Caco-2 (cell line): ENCODE measurements at regions of chr2 and their contacts with region 1.

Region 1: DNA sequence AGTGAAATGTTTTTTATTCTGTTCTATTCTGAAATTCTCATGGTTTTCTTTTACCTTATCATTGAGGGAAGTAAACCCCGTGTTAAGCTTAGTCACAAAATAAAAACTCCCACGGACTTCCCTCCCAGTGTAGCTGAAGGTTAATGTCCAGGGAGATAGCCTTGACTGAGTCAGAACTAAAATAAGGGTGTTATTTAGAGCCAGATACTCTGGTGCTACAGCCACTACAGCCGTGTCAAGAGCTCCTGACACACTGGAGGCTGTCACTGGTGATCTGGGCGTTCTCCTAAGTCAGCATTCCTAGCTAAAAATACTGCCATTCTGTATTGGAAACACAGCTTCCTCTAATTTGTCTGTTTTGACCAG is 82.0 kb upstream of the RANBP2 start:
- DNase-seq: no peak
- H3K4me3 ChIP-seq: no peak overlapping the region
- H3K4me3 Mint-ChIP-seq: no peak overlapping the region
- H3K27ac Mint-ChIP-seq: no peak overlapping the region
- H3K4me1 ChIP-seq: peaks cover 39% of the 10 kb centered on the region
- H3K4me1 Mint-ChIP-seq: peaks cover 24% of the 10 kb centered on the region
- H3K27me3 ChIP-seq: no peaks in the 10 kb centered on the region
- H3K27me3 Mint-ChIP-seq: no peaks in the 10 kb centered on the region
- CTCF ChIP-seq: no peak

Region 2: DNA sequence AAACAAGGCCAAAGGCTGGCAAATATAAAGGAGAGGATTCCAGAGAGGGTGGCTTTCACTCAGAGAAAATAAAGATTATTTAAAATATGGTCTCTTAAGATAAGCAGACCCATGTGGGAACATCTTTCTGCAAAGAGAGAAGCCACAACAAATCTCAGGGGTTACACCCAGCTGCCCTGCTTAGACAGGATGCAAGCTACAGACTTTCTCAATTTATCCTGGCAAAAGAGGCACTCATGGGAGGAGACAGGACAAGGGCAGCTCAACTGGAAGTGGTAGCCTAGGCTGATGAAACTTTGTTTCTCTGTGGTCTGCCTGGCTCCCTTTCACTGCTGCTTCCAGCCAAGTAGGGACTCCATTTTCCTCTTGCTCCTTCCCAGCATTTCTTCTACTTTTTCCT is 285.4 kb before region 1 on chr2:
- CTCF ChIA-PET with region 1: interaction called, 3 read pairs
- POLR2A ChIA-PET with region 1: no interaction called
- intact Hi-C with region 1: loop called (anchors 1 kb)
- DNase-seq: no peak
- H3K4me3 ChIP-seq: no peak overlapping the region
- H3K4me3 Mint-ChIP-seq: no peak overlapping the region
- H3K27ac Mint-ChIP-seq: no peak overlapping the region
- H3K4me1 ChIP-seq: no peaks in the 10 kb centered on the region
- H3K4me1 Mint-ChIP-seq: no peaks in the 10 kb centered on the region
- H3K27me3 ChIP-seq: no peaks in the 10 kb centered on the region
- H3K27me3 Mint-ChIP-seq: no peaks in the 10 kb centered on the region
- CTCF ChIP-seq: no peak

Region 3: GRCh38 chr2:108570416-108570815 is 66.9 kb before region 1 on chr2:
- CTCF ChIA-PET with region 1: no interaction called
- POLR2A ChIA-PET with region 1: no interaction called
- intact Hi-C with region 1: no loop called
- DNase-seq: no peak
- H3K4me3 ChIP-seq: no peak overlapping the region
- H3K4me3 Mint-ChIP-seq: no peak overlapping the region
- H3K27ac Mint-ChIP-seq: no peak overlapping the region
- H3K4me1 ChIP-seq: peaks cover 6% of the 10 kb centered on the region; the same call in 1 of the 2 replicates
- H3K4me1 Mint-ChIP-seq: peaks cover 36% of the 10 kb centered on the region
- H3K27me3 ChIP-seq: no peaks in the 10 kb centered on the region
- H3K27me3 Mint-ChIP-seq: no peaks in the 10 kb centered on the region
- CTCF ChIP-seq: no peak

Region 4: DNA sequence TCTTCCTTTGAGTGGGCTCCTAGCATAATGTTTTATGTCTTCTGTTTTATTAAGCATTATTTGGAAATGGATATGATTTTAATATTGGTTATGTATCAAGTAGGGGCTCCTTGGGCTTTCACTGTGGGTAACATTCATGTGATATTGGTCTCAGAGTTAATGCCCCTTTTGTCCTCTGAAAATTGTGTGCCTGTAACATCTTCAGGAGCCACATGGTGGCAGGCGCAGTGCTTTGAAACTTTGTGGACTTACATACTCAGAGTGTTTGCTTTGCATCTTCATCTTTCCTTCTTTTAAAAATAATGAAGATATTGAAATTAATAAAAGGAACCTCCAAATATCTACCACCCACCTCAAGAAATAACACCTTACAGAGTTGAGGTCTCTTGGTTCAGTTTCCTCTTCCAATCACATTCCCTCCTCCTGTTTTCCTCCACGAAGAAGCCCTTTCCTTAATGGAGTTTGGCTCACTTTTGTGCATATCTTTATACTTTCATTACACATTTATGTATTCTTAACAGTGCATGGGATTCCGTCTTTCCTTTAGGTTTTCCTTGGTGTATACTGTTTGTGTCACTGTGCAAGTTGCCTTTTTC is 29.5 kb before region 1 on chr2:
- CTCF ChIA-PET with region 1: interaction called, 25 read pairs
- POLR2A ChIA-PET with region 1: no interaction called
- intact Hi-C with region 1: loop called (anchors 1 kb)
- DNase-seq: peak in 1 of 2 experiments; percentile 35
- H3K4me3 ChIP-seq: no peak overlapping the region
- H3K4me3 Mint-ChIP-seq: no peak overlapping the region
- H3K27ac Mint-ChIP-seq: no peak overlapping the region
- H3K4me1 ChIP-seq: peaks cover 6% of the 10 kb centered on the region; the same call in 1 of the 2 replicates
- H3K4me1 Mint-ChIP-seq: peaks cover 7% of the 10 kb centered on the region
- H3K27me3 ChIP-seq: no peaks in the 10 kb centered on the region
- H3K27me3 Mint-ChIP-seq: no peaks in the 10 kb centered on the region
- CTCF ChIP-seq: peak; percentile 66 to 70

Region 5: DNA sequence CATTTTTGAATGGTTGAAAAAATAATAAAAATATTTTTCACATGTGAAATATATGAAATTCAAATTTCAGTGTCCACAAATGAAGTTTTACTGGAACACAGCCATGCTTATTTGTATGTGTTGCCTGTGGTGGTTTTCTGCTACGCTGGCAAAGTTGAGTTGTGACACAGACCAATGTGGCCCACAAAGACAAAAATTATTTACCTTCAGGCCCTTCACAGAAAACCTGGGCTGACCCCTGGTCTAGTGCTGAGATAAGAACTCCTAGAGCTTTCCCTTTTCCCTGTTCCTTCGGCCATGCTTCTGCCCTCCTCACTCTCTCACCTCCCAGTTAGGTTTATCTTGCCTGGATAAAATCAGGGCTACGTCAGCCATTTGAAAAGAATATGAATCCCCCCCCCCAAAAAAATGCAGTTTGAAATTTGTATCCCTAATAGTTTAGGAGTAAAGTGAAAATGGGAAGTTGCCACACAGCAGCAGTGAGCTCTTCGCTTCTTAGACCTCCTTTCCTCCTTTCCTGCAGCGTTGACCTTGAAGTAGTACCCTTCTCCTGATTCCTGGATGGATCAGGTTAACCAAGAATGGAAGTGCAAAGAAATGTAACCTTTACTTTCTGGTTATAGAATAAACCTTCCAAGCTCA is 12.0 kb before region 1 on chr2:
- CTCF ChIA-PET with region 1: interaction called, 20 read pairs
- POLR2A ChIA-PET with region 1: no interaction called
- intact Hi-C with region 1: no loop called
- DNase-seq: no peak
- H3K4me3 ChIP-seq: no peak overlapping the region
- H3K4me3 Mint-ChIP-seq: no peak overlapping the region
- H3K27ac Mint-ChIP-seq: no peak overlapping the region
- H3K4me1 ChIP-seq: peaks cover 16% of the 10 kb centered on the region
- H3K4me1 Mint-ChIP-seq: peaks cover 18% of the 10 kb centered on the region
- H3K27me3 ChIP-seq: no peaks in the 10 kb centered on the region
- H3K27me3 Mint-ChIP-seq: no peaks in the 10 kb centered on the region
- CTCF ChIP-seq: no peak